Breast epithelium (tissue), 4 donors: ENCODE measurements at regions of chr16 and their contacts with region 1.

Region 1: GRCh38 chr16:46961373-46962353 is 11.8 kb downstream of the DNAJA2 start:
- DNase-seq: no peak
- H3K4me3 ChIP-seq: no peak overlapping the region
- H3K27ac ChIP-seq: no peak overlapping the region
- H3K4me1 ChIP-seq: no peaks in the 10 kb centered on the region
- H3K27me3 ChIP-seq: no peaks in the 10 kb centered on the region
- CTCF ChIP-seq: no peak
- POLR2A ChIP-seq: no peak

Region 2: DNA sequence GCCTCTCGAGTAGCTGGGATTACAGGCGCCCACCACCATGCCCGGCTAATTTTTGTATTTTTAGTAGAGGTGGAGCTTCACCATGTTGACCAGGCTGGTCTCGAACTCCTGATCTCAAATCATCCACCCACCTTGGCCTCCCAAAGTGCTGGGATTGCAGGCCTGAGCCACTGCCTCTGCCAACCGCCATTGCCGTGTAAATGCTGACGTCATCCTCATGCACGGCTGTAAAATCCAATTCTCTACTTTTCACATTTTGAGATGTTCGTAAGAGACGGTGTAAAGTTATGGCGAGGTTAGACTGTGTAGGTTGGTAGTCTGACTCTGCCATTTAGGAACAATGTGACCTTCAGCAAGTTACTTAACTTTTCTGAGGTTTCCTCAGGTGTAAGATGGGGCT is 13.5 kb after region 1 on chr16:
- intact Hi-C with region 1: loop called (anchors 1 kb)
- DNase-seq: no peak
- H3K4me3 ChIP-seq: no peak overlapping the region
- H3K27ac ChIP-seq: no peak overlapping the region
- H3K4me1 ChIP-seq: peaks cover 4% of the 10 kb centered on the region in 2 donors
- H3K27me3 ChIP-seq: no peaks in the 10 kb centered on the region
- CTCF ChIP-seq: no peak
- POLR2A ChIP-seq: no peak